ENCODE measurements at regions of chr4 and their contacts with region 1.

Region 1: DNA sequence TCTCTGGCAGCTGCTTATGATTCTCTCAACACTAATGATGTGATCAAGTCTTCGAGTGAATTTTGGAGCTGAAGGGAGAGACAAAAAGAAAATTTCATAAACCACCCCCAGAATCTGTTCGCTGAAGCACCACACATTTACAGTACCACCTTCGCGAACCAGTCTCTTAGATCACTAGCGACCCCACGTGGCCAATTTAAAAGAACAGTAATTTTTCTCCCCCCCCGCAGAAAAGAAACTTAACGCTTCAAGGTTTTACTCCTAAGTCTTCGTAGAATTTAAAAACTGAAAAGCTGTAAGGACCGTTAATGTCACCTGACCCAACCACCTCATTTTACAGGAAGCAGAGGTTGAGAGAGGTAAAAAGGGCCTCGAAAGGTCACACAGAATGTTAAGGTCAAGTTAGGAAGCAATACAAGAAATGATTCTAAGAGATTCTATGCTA is 187.5 kb downstream of the QDPR start:
- DNase-seq: peak in 3 of 5 donors; percentile 30 to 61 (median 46)
- ATAC-seq: peak; percentile 26 to 76 (median 60)
- H3K4me3 ChIP-seq: peak overlapping the region in 1 of 12 donors; percentile 1
- H3K27ac ChIP-seq: no peak overlapping the region
- H3K4me1 ChIP-seq: peaks cover 0 to 15% (median 10%) of the 10 kb centered on the region in 12 donors
- H3K27me3 ChIP-seq: no peaks in the 10 kb centered on the region
- CTCF ChIP-seq: peak; percentile 50 to 81 (median 75)
- POLR2A ChIP-seq: no peak

Region 2: GRCh38 chr4:16289897-16290554 is 1034.4 kb before region 1 on chr4:
- intact Hi-C with region 1: loop called in 9 of 10 experiments (anchors 2 to 10 kb)
- DNase-seq: no peak
- ATAC-seq: peak in 1 of 4 donors; percentile 26
- H3K4me3 ChIP-seq: no peak overlapping the region
- H3K27ac ChIP-seq: no peak overlapping the region
- H3K4me1 ChIP-seq: peaks cover 0 to 6% (median 0%) of the 10 kb centered on the region in 12 donors
- H3K27me3 ChIP-seq: peaks cover 0 to 35% (median 0%) of the 10 kb centered on the region in 9 donors
- CTCF ChIP-seq: peak; percentile 59 to 86 (median 70)
- POLR2A ChIP-seq: no peak

Region 3: DNA sequence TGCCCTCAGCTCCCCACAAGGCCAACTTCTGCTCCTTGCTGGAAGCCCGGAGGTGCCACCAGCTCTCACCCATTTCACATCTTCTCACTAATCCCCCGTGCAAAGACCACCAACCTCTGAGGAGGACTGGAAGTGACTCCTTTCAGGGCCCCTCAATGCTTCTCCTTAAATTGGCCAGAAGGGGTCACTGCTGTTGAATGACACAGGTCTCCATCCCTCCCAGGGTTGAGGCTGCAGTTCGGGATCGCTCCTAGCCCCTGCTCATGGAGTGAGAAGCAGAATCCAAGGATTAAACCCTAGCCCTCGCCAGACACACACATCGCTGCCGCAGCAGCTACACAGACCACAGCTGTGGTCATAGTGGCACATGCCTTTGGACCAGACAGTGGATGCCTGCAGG is 818.7 kb before region 1 on chr4:
- intact Hi-C with region 1: loop called in 5 of 10 experiments (anchors 10 kb)
- DNase-seq: peak in 2 of 5 donors; percentile 10 to 26
- ATAC-seq: peak in 3 of 4 donors; percentile 15 to 54 (median 34)
- H3K4me3 ChIP-seq: no peak overlapping the region
- H3K27ac ChIP-seq: no peak overlapping the region
- H3K4me1 ChIP-seq: no peaks in the 10 kb centered on the region
- H3K27me3 ChIP-seq: no peaks in the 10 kb centered on the region
- CTCF ChIP-seq: peak in 9 of 12 donors; percentile 18 to 48 (median 38)
- POLR2A ChIP-seq: no peak

Region 4: DNA sequence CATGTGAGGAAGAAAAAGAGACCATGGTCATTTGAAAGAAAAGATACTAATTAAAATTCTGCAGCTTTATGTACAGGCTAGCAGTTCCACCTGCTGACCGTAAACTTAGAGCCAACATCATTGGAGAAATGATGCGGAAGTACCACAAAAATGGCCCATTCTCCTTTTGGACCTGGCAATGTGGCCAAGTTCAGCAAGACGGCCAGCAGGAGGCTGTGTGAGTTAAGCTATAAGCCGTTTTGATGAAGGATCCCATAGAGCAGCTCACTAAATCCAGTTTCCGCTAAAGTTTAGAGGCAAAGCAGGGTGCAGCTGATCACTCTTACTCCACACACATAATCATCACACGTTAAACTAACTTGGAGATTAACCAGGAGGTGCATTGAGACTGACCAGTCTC is 559.8 kb before region 1 on chr4:
- intact Hi-C with region 1: loop called in 1 of 10 experiments (anchors 10 kb)
- DNase-seq: no peak
- ATAC-seq: peak in 1 of 4 donors; percentile 30
- H3K4me3 ChIP-seq: no peak overlapping the region
- H3K27ac ChIP-seq: no peak overlapping the region
- H3K4me1 ChIP-seq: peaks cover 0 to 13% (median 0%) of the 10 kb centered on the region in 12 donors
- H3K27me3 ChIP-seq: no peaks in the 10 kb centered on the region
- CTCF ChIP-seq: peak in 4 of 12 donors; percentile 29 to 37 (median 34)
- POLR2A ChIP-seq: no peak

Region 5: DNA sequence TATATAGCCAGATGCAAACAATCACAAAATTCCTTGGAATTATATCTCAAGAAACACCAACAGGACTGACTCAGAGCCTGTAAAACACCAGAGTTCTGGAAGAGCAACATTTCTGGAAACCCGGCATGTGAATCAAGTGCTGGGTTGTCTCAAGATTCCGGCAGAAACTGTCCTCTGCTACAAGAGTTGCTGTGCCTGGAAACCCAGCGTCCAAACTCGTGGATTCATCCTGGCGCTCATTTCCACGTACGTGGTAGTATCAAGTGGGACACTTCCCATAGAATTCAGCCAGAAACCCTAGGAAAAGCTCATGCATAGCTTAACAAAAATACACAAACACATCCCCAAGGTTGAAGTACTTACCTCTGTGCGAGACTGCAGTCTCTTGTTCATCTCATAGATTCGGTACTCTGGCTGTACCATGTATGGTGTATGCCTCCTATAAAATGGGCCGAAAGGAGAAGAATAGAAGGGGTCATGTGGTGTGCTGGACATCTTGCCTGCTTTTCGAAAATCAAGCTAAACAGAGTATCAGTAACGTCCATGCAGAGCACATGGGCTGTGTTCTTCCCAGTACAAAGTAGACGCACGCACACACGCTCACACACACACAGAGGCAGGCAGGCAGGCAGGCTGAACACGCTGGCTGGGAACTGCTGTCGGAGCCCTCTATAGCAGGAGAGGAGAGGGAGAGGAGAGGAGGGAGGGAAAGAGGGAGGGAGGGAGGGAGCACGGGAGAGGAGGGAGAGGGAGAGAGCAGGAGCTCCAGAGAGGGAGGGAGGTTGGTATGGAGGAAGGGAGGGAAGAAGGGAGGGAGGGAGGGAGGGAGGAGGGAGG is 426.2 kb before region 1 on chr4 and contains the start of gene LDB2:
- intact Hi-C with region 1: loop called in 1 of 10 experiments (anchors 5 kb)
- DNase-seq: peak; percentile 67 to 85 (median 78)
- ATAC-seq: peak; percentile 92 to 96 (median 92)
- H3K4me3 ChIP-seq: peak within 1 kb of the TSS; percentile 34 to 87 (median 62)
- H3K27ac ChIP-seq: peak within 1 kb of the TSS; percentile 46 to 87 (median 77)
- H3K4me1 ChIP-seq: peaks cover 0 to 25% (median 5%) of the 10 kb centered on the region in 12 donors
- H3K27me3 ChIP-seq: no peaks in the 10 kb centered on the region
- CTCF ChIP-seq: no peak
- POLR2A ChIP-seq: no peak
- total RNA-seq, gene LDB2: 9.5 to 38.7 (median 26.6) TPM

Region 6: DNA sequence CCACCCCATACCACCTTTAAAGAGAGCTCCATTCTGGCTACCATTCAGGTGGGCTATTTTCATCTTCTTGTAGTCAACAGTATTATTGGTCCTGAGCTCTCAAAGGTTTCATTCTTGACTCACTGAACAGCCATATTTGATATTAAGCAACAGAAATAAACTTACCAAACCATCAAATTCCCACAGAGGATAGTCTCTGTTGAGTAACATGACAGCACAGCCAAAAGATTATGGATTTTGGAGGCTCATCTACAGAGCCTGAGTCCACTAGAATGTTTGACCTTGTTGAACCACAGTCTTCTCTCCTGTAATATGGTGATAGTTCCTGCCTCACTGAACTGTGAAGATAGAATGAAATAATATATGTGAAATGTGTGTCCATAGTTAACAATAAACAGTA is 149.7 kb before region 1 on chr4:
- intact Hi-C with region 1: loop called in 9 of 10 experiments (anchors 5 to 10 kb)
- DNase-seq: no peak
- ATAC-seq: no peak
- H3K4me3 ChIP-seq: no peak overlapping the region
- H3K27ac ChIP-seq: no peak overlapping the region
- H3K4me1 ChIP-seq: peaks cover 0 to 6% (median 0%) of the 10 kb centered on the region in 12 donors
- H3K27me3 ChIP-seq: no peaks in the 10 kb centered on the region
- CTCF ChIP-seq: no peak
- POLR2A ChIP-seq: no peak